ENCODE measurements at regions of chr16 and their contacts with region 1.

Region 1: DNA sequence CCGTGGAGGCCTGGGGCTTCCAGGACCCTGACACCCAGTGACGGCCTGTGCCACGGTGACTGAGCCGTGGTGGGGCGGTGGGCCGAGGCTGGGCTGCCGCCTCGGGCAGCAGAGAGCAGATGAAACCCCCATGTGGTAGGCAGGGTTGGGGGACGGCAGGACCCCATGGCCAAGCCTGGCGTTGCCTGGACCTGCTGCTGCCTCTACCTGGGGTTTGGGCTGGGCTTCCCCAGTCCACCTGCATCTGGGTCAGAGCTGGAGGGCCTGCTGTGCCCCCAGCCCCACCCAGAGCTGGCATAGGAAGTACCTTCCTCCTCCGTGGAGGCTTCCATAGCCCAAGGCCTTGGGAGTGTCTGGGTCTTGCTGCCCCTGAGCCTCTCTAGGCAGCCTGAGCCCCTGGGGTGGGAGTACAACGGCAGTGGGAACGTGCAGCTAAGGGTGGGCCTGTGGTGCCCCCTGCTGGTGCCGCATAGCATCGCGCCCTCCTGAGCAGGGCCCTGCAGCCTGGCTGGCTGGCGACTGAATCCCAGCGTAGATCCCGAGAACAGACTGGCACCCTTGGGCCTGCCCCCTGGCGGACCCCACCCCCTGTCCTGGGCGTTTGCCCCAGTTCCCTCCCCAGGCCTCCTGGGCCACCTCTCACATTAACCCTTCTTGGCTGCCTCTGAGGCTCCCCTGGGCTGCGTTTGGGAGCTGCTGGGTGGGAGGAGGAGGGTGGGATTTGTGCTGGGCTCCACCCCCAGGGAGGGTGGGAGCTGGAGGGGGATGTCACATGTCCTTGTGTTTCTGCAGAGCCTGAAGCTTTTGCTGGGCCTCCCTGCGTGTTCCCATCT is 12.6 kb upstream of the ATP6V0C start:
- DNase-seq: peak; percentile 68 to 85
- ATAC-seq: peak; percentile 85

Region 2: GRCh38 chr16:2233872-2234812 is 267.0 kb before region 1 on chr16:
- intact Hi-C with region 1: no loop called
- DNase-seq: no peak
- ATAC-seq: no peak

Region 3: GRCh38 chr16:2340564-2341455 is 160.3 kb before region 1 on chr16 and contains the start of gene ABCA3:
- intact Hi-C with region 1: loop called in 1 of 2 experiments (anchors 10 kb)
- DNase-seq: peak; percentile 85 to 94
- ATAC-seq: peak; percentile 91
- total RNA-seq, gene ABCA3: 3.8 to 3.9 TPM

Region 4: GRCh38 chr16:2429034-2429770 is 71.9 kb before region 1 on chr16 and contains the start of gene CCNF:
- intact Hi-C with region 1: loop called in 1 of 2 experiments (anchors 10 kb)
- DNase-seq: peak; percentile 97 to 99
- ATAC-seq: peak; percentile 95
- total RNA-seq, gene CCNF: 3.0 to 7.3 TPM

Region 5: GRCh38 chr16:2682209-2683021 is 181.3 kb after region 1 on chr16 and contains the start of gene KCTD5:
- intact Hi-C with region 1: no loop called
- DNase-seq: peak; percentile 96 to 97
- ATAC-seq: peak; percentile 82
- total RNA-seq, gene KCTD5: 49.3 to 79.6 TPM